Cardiac septum (tissue), 1 donor: ENCODE measurements at regions of chr3 and their contacts with region 1.

Region 1: GRCh38 chr3:12663936-12664908 is at the start of gene RAF1:
- DNase-seq: peak; percentile 99
- total RNA-seq, gene RAF1: 118 TPM

Region 2: DNA sequence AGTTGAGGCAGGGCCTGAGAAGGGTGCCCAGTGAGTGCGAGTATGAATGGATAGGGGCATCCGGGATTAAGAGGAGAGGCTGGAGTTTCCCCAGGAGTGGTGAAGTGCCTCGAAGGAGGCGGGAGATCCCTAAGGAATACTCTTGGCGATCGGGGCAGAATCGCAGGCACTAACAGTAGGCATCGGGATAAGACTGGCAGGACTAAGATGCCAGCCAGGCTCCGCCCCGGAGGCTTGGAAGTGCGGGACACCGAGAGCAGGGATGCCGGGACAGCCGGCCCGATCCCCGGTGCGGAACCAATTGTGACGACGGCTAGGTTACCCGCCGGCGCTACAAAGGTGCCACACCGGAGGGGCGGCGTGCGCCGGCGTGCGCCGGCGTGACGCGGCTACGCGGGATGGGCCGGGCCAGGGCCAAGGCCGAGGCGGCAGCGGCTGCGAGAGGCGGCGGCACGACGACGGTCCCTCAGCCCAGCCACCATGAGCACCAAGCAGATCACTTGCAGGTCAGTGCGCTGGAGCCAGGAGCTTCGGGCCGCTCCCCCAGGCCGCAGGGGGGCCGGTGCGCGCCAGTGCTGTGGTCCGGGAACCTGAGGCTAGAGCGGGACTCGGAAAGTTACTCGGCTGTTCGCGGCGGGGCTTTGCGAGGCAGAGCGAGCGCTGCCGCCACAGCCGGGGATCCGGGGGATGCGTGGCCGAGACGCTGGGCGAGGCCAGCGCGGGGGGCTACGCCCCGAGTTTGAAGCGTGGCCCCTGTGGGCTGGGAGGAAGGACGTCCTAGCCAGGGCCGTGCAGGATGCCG is 107.3 kb before region 1 on chr3 and contains the start of gene MKRN2:
- intact Hi-C with region 1: loop called (anchors 1 kb)
- DNase-seq: peak; percentile 94
- total RNA-seq, gene MKRN2: 27.9 TPM

Region 3: GRCh38 chr3:12601072-12601471 is 63.1 kb before region 1 on chr3:
- intact Hi-C with region 1: loop called (anchors 10 kb)
- DNase-seq: no peak

Region 4: GRCh38 chr3:12629560-12629959 is 34.7 kb before region 1 on chr3:
- intact Hi-C with region 1: loop called (anchors 5 kb)
- DNase-seq: peak; percentile 84

Region 5: GRCh38 chr3:12719984-12720898 is 56.0 kb after region 1 on chr3:
- intact Hi-C with region 1: no loop called
- DNase-seq: peak; percentile 85